Right ventricle myocardium superior (tissue), 1 donor: ENCODE measurements at regions of chr14 and their contacts with region 1.

Region 1: DNA sequence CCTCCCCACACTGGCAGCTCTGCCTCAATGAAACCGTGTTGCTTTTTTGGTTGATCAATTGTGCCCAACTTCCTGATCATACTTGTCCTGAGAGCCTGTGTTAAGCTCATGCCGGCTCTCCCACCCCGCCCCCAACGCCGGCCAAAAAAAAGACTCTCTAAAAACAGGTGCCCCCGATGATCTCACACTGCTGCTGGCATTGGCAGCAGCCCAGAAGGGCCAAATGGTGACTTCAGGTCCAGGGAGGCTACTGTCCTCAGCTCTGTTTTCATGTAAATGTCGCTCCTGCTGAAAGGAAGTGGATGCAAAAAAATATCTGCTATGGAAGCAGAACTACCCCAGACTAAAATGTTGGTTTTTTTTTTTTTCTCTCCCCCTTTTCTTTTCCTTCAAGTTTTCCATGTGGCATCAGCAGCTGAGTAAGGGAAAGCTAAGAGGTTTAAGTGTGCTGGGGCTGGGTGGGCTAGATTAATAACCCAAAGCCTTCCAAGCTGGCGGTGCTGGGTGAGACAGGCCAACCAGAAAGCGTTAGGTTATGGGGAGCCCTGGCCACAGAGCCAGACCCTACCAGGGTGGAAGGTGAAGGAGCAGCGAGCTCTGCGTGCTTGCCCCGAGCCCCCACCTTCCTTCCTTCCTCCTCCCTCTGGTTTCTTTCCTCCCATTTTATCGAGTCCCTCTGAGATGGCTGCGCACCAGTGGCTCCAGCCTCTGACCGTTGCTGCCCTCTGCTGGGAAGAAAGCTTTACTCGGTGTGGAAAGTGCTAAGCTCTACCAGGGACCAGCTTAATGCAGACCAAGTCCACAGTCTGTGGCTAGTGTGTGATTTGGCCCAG is 396.1 kb downstream of the NRXN3 start:
- DNase-seq: peak; percentile 69
- ATAC-seq: peak; percentile 98

Region 2: DNA sequence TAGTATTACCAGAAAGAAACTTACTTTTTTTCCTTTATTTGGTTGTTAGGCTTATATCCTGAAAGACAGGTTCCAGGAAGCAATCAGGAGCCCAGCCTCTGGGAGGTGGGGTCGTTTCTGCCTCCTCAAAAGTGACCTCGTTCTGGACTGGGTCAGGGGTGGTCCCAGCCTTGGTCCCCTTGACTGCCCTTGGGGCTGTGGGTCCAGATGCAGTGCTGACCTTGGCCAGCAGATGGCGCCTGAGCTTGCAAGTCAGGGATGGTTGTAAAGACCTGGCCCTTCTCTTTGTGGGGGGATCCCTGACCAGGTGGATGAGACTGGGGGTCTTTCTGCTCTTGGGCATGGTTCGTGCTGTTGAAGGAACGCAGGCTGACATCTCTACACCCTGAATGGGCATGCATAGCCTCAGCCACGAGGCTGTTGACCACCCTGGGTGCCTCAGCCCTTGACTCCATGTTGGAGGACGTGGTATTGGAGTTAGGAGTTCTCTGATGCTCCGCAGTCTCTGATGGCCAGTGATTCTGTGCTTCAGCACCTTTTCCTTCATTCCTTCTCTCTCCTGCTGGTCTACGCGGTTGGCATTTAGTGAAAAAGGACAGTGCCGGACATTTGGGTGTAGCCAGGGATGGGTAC is 704.0 kb before region 1 on chr14:
- intact Hi-C with region 1: loop called (anchors 10 kb)
- DNase-seq: peak; percentile 85
- ATAC-seq: peak; percentile 86

Region 3: GRCh38 chr14:78010688-78011087 is 555.6 kb before region 1 on chr14:
- intact Hi-C with region 1: loop called (anchors 10 kb)
- DNase-seq: no peak
- ATAC-seq: no peak

Region 4: DNA sequence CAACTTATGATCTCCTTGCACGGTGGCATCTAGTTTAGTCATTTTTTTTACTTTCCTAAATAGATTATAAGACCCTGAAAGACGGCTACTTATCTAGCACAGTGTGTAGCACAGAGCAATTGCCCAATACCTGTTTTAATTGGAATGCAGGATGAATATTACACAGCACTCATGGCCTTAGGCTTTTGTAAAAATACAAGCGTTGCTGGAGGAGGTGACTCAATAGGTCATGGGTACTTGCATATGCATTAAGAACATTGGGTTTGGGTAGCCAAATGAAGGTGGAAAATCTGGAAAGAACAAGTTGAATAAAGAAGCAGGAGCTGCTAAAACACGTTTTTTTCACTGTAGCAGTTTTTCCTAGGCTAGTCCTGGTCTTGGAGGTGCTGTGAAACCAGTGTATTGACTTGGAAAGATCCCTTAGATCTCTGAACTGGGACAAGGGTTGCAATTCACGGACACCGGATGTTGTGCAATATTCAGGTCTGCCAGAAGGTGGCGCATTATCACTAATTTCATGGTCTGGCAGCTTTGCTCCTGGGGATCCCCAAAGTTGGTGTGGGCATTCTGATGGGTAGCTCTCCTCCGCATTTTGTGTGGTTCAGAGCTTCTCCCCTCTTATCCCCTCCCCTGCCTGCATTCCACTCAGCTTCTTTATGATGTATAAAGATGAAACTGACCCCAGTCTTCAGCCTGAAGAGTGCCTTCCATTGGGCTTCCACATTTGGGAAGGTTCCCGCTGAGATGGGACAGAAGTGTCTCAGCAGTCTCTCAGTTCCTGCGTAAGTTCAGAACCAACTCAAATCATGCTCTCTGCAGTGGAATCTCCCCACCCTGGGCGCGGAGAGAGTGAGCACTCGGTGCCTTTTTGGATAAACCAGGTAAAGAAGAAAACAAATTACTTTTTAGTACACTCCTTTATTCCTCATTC is 117.8 kb before region 1 on chr14:
- intact Hi-C with region 1: loop called (anchors 5 kb)
- DNase-seq: peak; percentile 43
- ATAC-seq: no peak